ENCODE measurements at regions of chr3 and their contacts with region 1.

Region 1: GRCh38 chr3:66450390-66451022 is 50.3 kb downstream of the LRIG1 start:
- DNase-seq: peak; percentile 58 to 87
- ATAC-seq: peak; percentile 35 to 77 (median 70)
- H3K4me3 ChIP-seq: peak overlapping the region in 5 of 10 donors; percentile 24 to 33 (median 28)
- H3K27ac ChIP-seq: peak overlapping the region; percentile 3 to 92 (median 66)
- H3K4me1 ChIP-seq: peaks cover 52 to 88% (median 72%) of the 10 kb centered on the region in 9 donors
- H3K27me3 ChIP-seq: no peaks in the 10 kb centered on the region
- CTCF ChIP-seq: no peak

Region 2: DNA sequence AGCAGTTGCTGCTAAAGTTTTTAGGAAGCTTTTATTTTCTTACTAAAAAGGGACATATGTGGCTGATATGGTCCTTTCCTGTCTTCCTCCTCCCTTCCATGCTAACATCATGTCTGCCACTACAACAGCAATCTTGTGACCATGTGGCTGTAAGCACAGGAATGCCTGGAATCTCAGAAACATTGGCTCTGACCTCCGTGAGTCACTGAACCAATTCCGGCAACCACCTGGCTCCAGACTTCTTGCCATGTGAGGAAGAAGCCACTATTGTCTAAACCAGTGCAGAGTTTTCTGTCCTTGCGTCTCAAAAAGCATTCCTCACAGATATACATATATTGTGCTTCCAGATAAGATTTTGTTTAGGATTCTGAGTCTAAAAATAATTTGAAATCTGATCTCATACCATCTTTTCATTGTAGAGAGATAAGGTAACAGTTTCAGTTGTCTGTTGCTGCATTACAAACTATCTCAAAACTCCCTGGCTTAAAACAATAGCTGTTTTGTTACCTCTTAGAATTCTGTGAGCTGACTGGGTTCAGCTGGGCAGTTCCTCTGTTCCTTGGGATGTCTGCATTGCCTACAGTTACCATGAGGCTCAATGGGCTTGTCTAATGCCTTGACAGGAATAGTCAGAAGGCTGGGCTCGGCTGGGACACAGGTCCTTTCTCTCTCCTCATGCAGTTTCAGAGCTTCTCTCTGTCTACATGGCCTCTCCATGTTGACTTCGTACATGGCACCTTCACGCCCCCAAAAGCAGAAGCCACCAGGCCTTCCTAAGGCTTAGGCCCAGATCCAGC is 334.4 kb before region 1 on chr3:
- intact Hi-C with region 1: no loop called
- DNase-seq: peak; percentile 17 to 71
- ATAC-seq: peak; percentile 85 to 96 (median 94)
- H3K4me3 ChIP-seq: no peak overlapping the region
- H3K27ac ChIP-seq: peak overlapping the region in 7 of 10 donors; percentile 39 to 90 (median 78)
- H3K4me1 ChIP-seq: peaks cover 5 to 23% (median 16%) of the 10 kb centered on the region in 9 donors
- H3K27me3 ChIP-seq: no peaks in the 10 kb centered on the region
- CTCF ChIP-seq: no peak

Region 3: DNA sequence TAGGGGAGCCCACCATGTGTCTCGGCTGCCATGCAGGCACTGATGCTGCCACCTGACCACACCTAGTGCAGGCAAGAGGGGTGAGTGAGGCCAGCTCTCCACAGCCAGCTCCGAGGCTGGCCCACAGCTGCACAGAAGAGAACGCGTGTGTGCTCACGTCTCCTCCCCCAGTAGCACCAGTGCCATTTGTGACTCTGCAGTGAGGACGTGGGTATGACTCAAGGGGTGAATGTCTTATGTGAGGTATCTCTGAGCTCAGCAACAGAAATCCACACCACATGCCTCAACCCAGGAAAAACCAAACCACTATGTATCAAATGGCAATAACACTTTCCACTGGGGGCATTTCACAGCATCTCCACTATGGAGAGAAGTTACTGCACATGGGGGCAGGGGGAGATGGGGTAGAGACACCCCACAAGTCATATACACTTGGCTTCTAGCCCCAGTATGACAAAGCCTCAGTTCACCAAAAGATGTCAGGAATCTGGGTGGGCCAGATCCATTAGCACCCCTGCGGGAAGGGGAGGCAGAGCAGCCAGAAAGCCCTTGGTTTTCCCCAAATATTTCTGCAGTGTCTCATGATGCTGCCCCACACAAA is 37.3 kb before region 1 on chr3:
- intact Hi-C with region 1: loop called in 1 of 10 experiments (anchors 5 kb)
- DNase-seq: no peak
- ATAC-seq: no peak
- H3K4me3 ChIP-seq: no peak overlapping the region
- H3K27ac ChIP-seq: peak overlapping the region in 7 of 10 donors; percentile 2 to 72 (median 56)
- H3K4me1 ChIP-seq: peaks cover 15 to 94% (median 58%) of the 10 kb centered on the region in 9 donors
- H3K27me3 ChIP-seq: no peaks in the 10 kb centered on the region
- CTCF ChIP-seq: no peak

Region 4: DNA sequence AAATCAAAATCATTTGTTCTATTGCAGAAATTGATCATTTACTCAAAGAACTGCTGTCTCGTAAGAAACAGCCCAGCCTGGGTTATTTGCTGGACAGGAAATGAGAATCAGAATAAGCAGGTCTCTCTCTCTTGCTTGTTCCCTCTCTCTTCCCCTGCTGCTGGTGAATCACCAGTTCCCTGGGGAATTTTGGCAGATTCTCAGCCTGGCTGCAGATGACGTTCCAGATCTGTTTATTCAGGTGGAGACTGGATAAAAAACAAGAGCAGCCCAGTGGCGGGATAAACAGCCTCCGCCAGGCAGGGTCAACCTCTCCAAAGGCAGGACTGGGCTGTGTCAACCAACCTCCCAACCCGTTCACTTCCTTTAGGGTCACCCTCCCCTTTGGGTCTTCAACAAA is 21.8 kb before region 1 on chr3:
- intact Hi-C with region 1: no loop called
- DNase-seq: peak; percentile 56 to 83
- ATAC-seq: peak; percentile 67 to 84 (median 77)
- H3K4me3 ChIP-seq: no peak overlapping the region
- H3K27ac ChIP-seq: peak overlapping the region; percentile 6 to 87 (median 64)
- H3K4me1 ChIP-seq: peaks cover 31 to 99% (median 86%) of the 10 kb centered on the region in 9 donors
- H3K27me3 ChIP-seq: no peaks in the 10 kb centered on the region
- CTCF ChIP-seq: no peak

Region 5: DNA sequence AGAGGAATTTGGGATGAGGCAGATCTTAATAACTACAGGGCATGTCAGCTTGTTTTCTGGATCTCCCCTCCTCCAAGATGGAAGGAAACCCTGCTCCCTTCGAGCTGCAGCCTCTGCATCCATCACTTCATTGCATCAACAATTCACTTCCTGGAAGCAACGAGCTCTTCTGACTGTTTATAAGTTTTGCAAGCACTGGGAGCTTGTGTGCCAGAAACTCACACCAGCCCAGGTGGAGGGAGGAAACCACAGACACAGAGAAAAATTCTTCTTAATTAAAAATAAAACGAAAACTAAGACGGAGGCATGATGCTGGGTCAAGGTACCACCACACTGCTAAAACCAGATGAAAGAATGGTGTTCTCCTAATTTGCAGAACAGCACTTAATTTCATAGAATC is 39.7 kb after region 1 on chr3:
- intact Hi-C with region 1: loop called in 5 of 10 experiments (anchors 5 to 10 kb)
- DNase-seq: no peak
- ATAC-seq: peak in 2 of 8 donors; percentile 21 to 33
- H3K4me3 ChIP-seq: peak overlapping the region in 1 of 10 donors; percentile 6
- H3K27ac ChIP-seq: peak overlapping the region in 7 of 10 donors; percentile 2 to 53 (median 38)
- H3K4me1 ChIP-seq: peaks cover 33 to 99% (median 85%) of the 10 kb centered on the region in 9 donors
- H3K27me3 ChIP-seq: no peaks in the 10 kb centered on the region
- CTCF ChIP-seq: no peak

Measured in heart right ventricle (tissue), 16 donors.